A549 (cell line): ENCODE measurements at regions of chr19 and their contacts with region 1.

Region 1: DNA sequence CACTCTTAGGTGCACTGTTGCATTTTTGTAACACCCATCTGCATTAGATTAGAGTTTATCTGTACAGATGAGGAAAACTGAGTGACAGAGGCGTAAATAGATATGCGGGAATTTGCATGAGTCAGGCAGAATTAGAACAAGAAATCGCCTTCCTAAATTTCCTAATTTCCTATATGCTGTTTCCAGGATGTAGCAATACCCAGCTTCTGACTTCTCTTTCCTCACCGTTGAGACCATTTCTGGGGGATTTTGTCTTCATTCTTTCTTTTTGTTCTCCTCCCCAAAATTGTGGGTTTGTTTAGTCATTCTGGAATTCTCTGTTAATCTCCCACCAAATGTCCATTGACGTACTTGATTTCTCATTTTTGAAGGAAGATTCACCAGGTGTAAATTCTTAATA is 10.6 kb upstream of the ZNF792 start:
- DNase-seq: no peak
- ATAC-seq: no peak
- H3K4me3 ChIP-seq: no peak overlapping the region
- H3K27ac ChIP-seq: peak overlapping the region in 1 of 2 experiments; percentile 75; a peak in 2 of 6 replicates
- H3K4me1 ChIP-seq: peaks cover 18% of the 10 kb centered on the region
- CTCF ChIP-seq: no peak
- EP300 ChIP-seq: no peak
- POLR2A ChIP-seq: no peak
- RAD21 ChIP-seq: no peak

Region 2: GRCh38 chr19:34712395-34713261 is 262.0 kb before region 1 on chr19:
- CTCF ChIA-PET with region 1: no interaction called
- POLR2A ChIA-PET with region 1: no interaction called
- DNase-seq: peak; percentile 77 to 90
- ATAC-seq: peak; percentile 75 to 95; a peak in 5 of 6 replicates
- H3K4me3 ChIP-seq: no peak overlapping the region
- H3K27ac ChIP-seq: no peak overlapping the region
- H3K4me1 ChIP-seq: no peaks in the 10 kb centered on the region
- CTCF ChIP-seq: peak; percentile 93
- EP300 ChIP-seq: no peak
- POLR2A ChIP-seq: no peak
- RAD21 ChIP-seq: peak; percentile 94 to 97

Region 3: DNA sequence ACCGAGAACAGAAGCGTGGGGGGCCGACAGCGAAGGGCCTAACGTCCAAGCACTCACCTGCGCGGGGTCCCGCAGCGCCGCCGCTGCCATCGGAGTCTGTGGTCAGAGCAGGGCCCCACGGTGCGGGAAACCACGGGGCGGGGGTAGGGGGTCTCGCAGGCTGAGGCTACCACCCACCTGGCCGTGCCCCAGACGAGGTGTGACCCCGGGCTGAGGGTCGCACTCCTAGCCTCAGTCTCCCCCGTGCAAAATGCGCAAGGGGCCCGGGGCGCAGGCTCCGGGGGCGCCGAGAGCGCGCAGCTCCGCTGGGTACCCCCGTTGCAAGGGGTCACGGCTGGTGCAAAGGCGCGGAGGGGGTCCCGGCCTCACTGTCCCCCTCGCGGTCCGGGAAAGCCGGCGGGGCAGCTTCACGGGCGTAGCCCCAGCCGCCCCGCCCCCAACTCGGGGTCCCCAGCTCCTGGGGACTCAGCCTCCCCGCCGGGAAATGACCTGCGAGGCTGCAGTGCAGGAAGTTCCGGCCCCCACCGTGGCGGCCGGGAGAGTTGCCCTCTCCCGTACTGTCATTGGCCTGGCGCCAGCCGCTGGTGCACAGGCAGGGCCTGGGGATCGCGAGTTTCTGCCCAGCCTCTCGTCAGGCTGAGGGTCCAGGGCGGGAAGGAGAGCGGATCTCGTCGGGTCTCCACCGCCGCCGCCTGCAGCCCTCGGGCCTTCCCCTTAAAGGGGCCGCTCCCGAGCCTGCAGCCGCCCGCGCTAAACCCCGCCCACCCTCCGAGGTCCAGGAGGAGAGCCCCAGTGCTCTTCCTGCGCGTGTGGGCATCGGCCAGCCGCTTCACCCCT is 10.9 kb before region 1 on chr19 and contains the start of gene ZNF792:
- CTCF ChIA-PET with region 1: interaction called, 87 read pairs
- POLR2A ChIA-PET with region 1: no interaction called
- DNase-seq: peak; percentile 59 to 94
- ATAC-seq: peak; percentile 90 to 95
- H3K4me3 ChIP-seq: peak within 1 kb of the TSS; percentile 87
- H3K27ac ChIP-seq: peak within 1 kb of the TSS; percentile 86 to 90
- H3K4me1 ChIP-seq: peaks cover 11% of the 10 kb centered on the region; the same call in 1 of the 3 replicates
- CTCF ChIP-seq: no peak
- EP300 ChIP-seq: no peak
- POLR2A ChIP-seq: peak; percentile 77
- RAD21 ChIP-seq: no peak
- polyA plus RNA-seq, gene ZNF792: 3.7 and 5.0 TPM in 2 replicates

Region 4: DNA sequence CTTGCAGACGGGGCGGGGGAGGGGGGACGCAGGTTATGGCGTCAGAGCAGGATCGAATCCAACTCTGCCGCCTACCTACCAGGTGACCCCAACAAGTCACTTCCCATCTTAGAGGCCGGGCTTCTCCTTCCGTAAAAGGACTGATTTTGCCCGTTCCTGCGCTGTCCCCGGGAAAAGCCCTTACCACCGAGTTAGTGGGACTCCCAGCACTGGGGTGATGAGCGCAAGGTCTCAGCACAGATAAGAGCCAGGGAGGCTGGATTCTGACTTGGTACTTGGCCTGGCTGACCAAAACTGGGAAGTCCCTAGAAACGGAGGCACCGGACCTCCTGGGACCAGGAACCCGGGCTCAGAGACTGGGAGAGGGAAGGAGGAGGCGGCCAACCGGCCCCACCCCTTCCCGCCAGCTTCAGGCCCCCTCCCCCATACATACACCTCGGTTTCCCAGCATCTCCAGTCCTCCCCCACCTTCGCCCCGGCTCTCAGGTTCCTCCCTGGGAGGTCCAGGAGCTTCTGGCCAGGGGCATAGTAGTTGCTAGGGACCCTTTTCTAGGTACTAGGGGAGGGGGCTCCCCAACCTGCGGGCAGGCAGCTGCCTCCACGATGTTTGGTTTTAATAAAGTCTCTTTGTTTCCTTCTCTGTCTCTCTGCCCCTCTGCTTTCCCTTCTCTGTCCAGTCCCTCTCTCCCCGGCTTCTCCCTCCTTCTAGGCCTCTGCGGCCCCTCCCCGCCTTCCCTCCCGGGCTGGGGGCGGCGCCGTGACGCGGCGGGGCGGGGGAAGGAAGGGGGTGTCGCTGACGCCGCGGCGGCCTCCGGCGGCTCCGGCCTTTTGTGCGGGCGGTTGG is 25.1 kb after region 1 on chr19 and contains the start of gene GRAMD1A:
- CTCF ChIA-PET with region 1: interaction called, 1,860 read pairs
- POLR2A ChIA-PET with region 1: interaction called, 13 read pairs
- DNase-seq: peak; percentile 98 to 99
- ATAC-seq: peak; percentile 73 to 77
- H3K4me3 ChIP-seq: peak within 1 kb of the TSS; percentile 91
- H3K27ac ChIP-seq: peak within 1 kb of the TSS; percentile 94 to 95
- H3K4me1 ChIP-seq: peaks cover 80% of the 10 kb centered on the region
- CTCF ChIP-seq: no peak
- EP300 ChIP-seq: peak; percentile 6 to 58; a peak in 3 of 5 replicates
- POLR2A ChIP-seq: peak; percentile 64
- RAD21 ChIP-seq: peak in 1 of 2 experiments; percentile 28; a peak in 2 of 5 replicates
- polyA plus RNA-seq, gene GRAMD1A: 184 and 221 TPM in 2 replicates

Region 5: GRCh38 chr19:35080613-35081170 is 106.0 kb after region 1 on chr19:
- CTCF ChIA-PET with region 1: interaction called, 55 read pairs
- POLR2A ChIA-PET with region 1: no interaction called
- DNase-seq: no peak
- ATAC-seq: no peak
- H3K4me3 ChIP-seq: no peak overlapping the region
- H3K27ac ChIP-seq: no peak overlapping the region
- H3K4me1 ChIP-seq: no peaks in the 10 kb centered on the region
- CTCF ChIP-seq: no peak
- EP300 ChIP-seq: no peak
- POLR2A ChIP-seq: no peak
- RAD21 ChIP-seq: no peak; a peak in 1 of 5 replicates

Region 6: GRCh38 chr19:35140962-35141637 is 166.5 kb after region 1 on chr19:
- CTCF ChIA-PET with region 1: interaction called, 50 read pairs
- POLR2A ChIA-PET with region 1: no interaction called
- DNase-seq: peak; percentile 95 to 100
- ATAC-seq: peak; percentile 59 to 86
- H3K4me3 ChIP-seq: peak overlapping the region; percentile 34
- H3K27ac ChIP-seq: peak overlapping the region in 1 of 2 experiments; percentile 52; a peak in 2 of 6 replicates
- H3K4me1 ChIP-seq: peaks cover 52% of the 10 kb centered on the region
- CTCF ChIP-seq: peak; percentile 66
- EP300 ChIP-seq: no peak
- POLR2A ChIP-seq: no peak
- RAD21 ChIP-seq: peak; percentile 65 to 82